A549 (cell line): ENCODE measurements at regions of chr17 and their contacts with region 1.

Region 1: GRCh38 chr17:78112518-78113226 is 15.9 kb downstream of the TMC6 start:
- DNase-seq: peak; percentile 73 to 96
- ATAC-seq: peak; percentile 78 to 92
- H3K4me3 ChIP-seq: no peak overlapping the region
- H3K27ac ChIP-seq: peak overlapping the region in 1 of 2 experiments; percentile 3; a peak in 1 of 6 replicates
- H3K4me1 ChIP-seq: no peaks in the 10 kb centered on the region
- CTCF ChIP-seq: peak; percentile 97
- EP300 ChIP-seq: no peak
- POLR2A ChIP-seq: no peak
- RAD21 ChIP-seq: peak; percentile 98

Region 2: DNA sequence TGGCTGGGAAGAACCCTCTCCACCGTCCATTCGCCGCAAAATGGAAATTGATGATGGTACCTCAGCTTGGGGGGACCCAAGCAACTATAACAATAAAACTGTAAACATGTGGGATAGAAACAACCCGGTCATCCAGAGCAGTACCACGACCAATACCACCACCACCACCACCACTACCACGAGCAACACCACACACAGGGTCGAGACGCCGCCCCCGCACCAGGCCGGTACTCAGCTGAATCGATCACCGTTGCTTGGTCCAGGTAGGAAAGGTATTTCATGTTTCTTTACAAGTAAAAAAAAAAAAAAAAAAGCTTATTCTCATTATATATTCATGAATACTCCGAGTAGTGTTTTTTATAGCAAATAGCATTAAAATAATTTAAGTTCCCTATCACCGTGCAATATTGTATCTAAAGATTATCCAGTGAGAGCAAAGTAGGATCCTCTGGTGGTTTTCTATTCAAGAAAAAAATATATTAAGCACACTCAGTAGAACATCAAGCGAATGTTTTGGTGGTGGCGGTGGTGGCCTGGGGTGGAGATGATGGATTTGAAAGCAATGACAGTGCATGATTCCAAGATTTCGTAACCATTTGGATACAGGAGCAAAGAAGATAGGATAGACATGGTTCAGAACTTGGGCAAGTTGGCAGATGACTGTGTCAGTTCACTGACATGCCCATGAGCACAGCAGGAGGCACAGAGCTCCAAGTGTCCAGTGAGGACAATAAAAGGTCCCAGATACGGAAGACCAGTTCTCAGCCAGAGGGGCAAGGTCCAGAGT is 61.3 kb before region 1 on chr17:
- CTCF ChIA-PET with region 1: no interaction called
- POLR2A ChIA-PET with region 1: no interaction called
- DNase-seq: no peak
- ATAC-seq: no peak
- H3K4me3 ChIP-seq: no peak overlapping the region
- H3K27ac ChIP-seq: no peak overlapping the region
- H3K4me1 ChIP-seq: no peaks in the 10 kb centered on the region
- CTCF ChIP-seq: no peak
- EP300 ChIP-seq: no peak
- POLR2A ChIP-seq: no peak
- RAD21 ChIP-seq: no peak

Region 3: GRCh38 chr17:78063489-78063888 is 49.2 kb before region 1 on chr17:
- CTCF ChIA-PET with region 1: interaction called, 11 read pairs
- POLR2A ChIA-PET with region 1: no interaction called
- DNase-seq: no peak
- ATAC-seq: no peak
- H3K4me3 ChIP-seq: no peak overlapping the region
- H3K27ac ChIP-seq: no peak overlapping the region
- H3K4me1 ChIP-seq: no peaks in the 10 kb centered on the region
- CTCF ChIP-seq: no peak
- EP300 ChIP-seq: no peak
- POLR2A ChIP-seq: no peak
- RAD21 ChIP-seq: no peak

Region 4: GRCh38 chr17:78128551-78129350 is 16.1 kb after region 1 on chr17 and contains the start of gene TMC6:
- CTCF ChIA-PET with region 1: interaction called, 185 read pairs
- POLR2A ChIA-PET with region 1: interaction called, 7 read pairs
- DNase-seq: peak; percentile 56 to 74
- ATAC-seq: peak; percentile 16 to 60
- H3K4me3 ChIP-seq: peak within 1 kb of the TSS; percentile 79
- H3K27ac ChIP-seq: peak within 1 kb of the TSS; percentile 77 to 93
- H3K4me1 ChIP-seq: peaks cover 14% of the 10 kb centered on the region
- CTCF ChIP-seq: no peak
- EP300 ChIP-seq: no peak
- POLR2A ChIP-seq: peak; percentile 38; the same call in 1 of the 2 replicates
- RAD21 ChIP-seq: no peak
- polyA plus RNA-seq, gene TMC6: 4.7 and 5.1 TPM in 2 replicates

Region 5: DNA sequence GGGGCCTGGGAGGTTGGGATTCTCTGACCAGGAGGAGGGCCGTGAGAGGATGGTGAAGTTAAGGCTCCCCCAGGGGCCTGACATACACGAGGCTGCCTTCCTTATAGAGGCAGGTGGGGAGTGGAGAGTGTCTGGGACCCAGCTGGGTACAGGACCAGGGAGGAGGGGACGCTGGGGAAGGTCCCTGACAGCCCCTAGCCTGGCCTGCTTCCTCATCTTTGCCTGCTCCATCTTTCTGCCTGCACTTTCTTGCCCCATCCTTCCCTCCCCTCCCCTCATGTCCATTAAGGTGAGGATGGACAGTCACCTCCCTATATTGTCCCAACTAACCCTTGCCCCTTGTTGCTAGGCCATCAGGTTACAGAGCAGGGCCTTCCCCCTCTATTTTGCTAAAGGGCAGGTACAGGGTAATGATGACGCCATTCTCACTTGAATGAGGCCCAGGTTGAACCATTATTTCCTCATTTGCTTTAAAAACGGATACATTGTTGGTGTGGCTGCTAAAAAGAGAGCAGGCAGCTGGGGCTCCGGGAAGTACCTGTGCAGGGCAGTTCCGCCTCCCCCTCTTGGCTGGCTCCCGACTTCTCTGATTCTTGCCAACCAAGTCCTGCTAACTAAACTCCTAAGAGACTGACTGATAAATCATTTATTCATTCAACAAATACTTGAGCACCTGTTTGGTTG is 34.8 kb after region 1 on chr17:
- CTCF ChIA-PET with region 1: interaction called, 185 read pairs
- POLR2A ChIA-PET with region 1: no interaction called
- DNase-seq: no peak
- ATAC-seq: no peak
- H3K4me3 ChIP-seq: no peak overlapping the region
- H3K27ac ChIP-seq: peak overlapping the region in 1 of 2 experiments; percentile 39; a peak in 3 of 6 replicates
- H3K4me1 ChIP-seq: peaks cover 53% of the 10 kb centered on the region
- CTCF ChIP-seq: no peak
- EP300 ChIP-seq: no peak
- POLR2A ChIP-seq: no peak
- RAD21 ChIP-seq: no peak

Region 6: DNA sequence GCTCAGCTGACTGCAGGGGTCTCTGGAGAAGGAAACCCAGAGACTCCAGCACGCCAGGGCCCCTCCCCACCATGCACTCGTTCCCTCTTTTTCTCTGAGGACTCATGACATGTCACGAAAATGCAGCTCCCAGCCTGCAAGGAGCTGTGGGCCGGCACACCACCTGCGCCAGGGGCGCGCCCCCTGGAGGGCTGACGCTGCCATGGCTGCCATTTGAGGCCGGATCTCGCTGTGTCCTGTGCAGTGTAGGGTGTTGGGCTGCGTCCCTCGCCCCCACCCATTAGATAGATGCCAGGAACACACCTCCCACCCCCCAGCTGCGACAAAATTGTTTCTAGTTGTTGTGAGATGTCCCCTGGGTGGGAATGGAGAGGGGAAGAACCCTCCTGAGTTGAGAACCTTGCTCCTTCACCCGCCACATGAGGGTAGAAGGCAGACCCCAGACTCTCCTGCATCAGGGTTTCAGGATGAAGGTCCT is 63.9 kb after region 1 on chr17:
- CTCF ChIA-PET with region 1: interaction called, 199 read pairs
- POLR2A ChIA-PET with region 1: interaction called, 7 read pairs
- DNase-seq: peak; percentile 76 to 86
- ATAC-seq: peak; percentile 75 to 81
- H3K4me3 ChIP-seq: no peak overlapping the region
- H3K27ac ChIP-seq: peak overlapping the region in 1 of 2 experiments; percentile 34; a peak in 1 of 6 replicates
- H3K4me1 ChIP-seq: peaks cover 30% of the 10 kb centered on the region
- CTCF ChIP-seq: peak; percentile 94
- EP300 ChIP-seq: no peak
- POLR2A ChIP-seq: no peak
- RAD21 ChIP-seq: peak; percentile 73 to 82

Region 7: DNA sequence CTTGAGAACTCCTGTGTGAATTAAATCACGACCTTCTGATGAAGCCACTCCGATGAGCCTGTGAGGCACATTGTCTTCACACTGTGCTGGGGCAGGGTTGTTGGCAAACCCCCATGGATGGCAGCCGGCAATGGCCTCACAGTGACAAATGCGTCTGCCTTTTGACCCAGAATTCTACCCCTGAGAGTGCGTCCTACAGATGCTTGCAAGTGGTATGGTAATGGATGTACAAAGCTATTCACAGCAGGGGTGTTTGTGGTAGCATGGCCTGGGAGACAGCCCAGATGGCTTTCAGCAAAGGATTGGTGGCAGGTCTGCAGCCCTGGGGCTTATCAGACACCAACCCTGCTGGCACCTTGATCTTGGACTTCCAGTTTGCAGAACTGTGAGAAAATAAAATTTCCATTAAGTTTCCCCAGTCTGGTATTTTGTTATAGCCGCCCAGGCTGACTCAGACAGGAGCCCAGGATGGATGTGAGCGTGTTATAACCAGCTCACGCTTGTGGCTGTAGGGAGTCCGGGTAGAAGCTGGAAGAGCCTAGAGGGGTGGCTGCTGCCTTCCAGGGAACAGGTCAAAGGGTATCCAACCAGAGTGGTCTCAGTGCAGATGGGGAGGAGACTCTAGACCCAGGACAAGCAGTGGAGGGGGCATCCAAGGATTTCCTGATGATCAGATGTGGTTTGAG is 84.6 kb after region 1 on chr17:
- CTCF ChIA-PET with region 1: interaction called, 10 read pairs
- POLR2A ChIA-PET with region 1: no interaction called
- DNase-seq: no peak
- ATAC-seq: peak in 1 of 2 experiments; percentile 52; a peak in 2 of 6 replicates
- H3K4me3 ChIP-seq: no peak overlapping the region
- H3K27ac ChIP-seq: no peak overlapping the region
- H3K4me1 ChIP-seq: no peaks in the 10 kb centered on the region
- CTCF ChIP-seq: no peak
- EP300 ChIP-seq: no peak
- POLR2A ChIP-seq: no peak
- RAD21 ChIP-seq: no peak

Region 8: GRCh38 chr17:78467049-78467715 is 354.5 kb after region 1 on chr17:
- CTCF ChIA-PET with region 1: no interaction called
- POLR2A ChIA-PET with region 1: no interaction called
- DNase-seq: no peak
- ATAC-seq: no peak
- H3K4me3 ChIP-seq: no peak overlapping the region
- H3K27ac ChIP-seq: no peak overlapping the region
- H3K4me1 ChIP-seq: no peaks in the 10 kb centered on the region
- CTCF ChIP-seq: no peak
- EP300 ChIP-seq: no peak
- POLR2A ChIP-seq: no peak
- RAD21 ChIP-seq: no peak